PC-3 (cell line): ENCODE measurements at regions of chr5 and their contacts with region 1.

Region 1: DNA sequence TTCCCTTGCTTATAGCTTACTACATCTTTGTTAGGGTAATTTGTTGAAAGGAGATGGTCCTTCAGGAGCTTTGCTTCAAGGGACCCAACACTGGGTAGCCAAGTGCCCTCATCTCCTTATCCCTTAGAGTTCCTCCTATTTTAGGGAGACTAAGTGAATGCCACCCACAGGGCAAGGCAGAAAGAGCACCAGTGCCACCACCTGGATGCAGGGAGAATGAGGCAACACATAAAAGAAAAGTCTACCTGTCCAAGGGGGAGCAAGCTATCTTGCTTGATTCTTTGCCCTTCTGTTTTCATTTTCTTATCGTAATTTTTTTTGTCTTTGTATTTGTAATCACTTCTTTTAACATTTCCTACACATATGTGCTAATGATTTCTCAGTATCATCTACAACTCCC is 205.5 kb downstream of the NPR3 start:
- DNase-seq: peak; percentile 80
- ATAC-seq: peak; percentile 92
- H3K4me3 ChIP-seq: no peak overlapping the region
- H3K27ac ChIP-seq: no peak overlapping the region
- H3K4me1 ChIP-seq: no peaks in the 10 kb centered on the region
- H3K27me3 ChIP-seq: no peaks in the 10 kb centered on the region
- CTCF ChIP-seq: peak; percentile 95

Region 2: DNA sequence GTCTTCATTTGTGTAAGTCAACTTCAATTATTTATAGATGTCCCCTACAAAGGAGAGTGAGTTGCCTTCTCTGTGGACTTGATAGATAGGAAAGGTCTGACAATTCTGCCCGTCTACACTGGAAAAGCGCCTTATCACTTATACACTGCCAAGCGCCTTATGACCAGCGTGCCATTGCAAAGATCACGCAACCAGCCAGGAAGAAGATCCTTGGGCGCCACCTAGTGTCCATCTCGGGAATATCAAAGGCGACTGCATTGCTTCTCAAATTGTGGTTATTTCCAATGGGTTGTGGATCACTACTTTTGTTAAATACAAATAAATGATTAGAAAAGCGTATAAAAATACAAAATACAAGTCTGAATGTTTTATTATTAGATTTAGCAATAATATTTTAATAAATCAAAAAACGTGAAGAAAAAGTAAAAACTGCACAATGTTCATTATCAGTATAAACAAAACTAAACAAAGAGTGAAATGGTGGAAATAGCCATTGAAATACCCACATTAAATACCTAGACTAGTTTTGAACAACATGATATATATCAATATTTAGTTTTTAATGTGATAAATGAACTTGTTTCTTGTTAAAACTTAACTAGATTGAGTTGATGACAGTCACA is 303.5 kb before region 1 on chr5:
- CTCF ChIA-PET with region 1: no interaction called
- POLR2A ChIA-PET with region 1: no interaction called
- intact Hi-C with region 1: loop called (anchors 5 kb)
- DNase-seq: peak; percentile 87
- ATAC-seq: peak; percentile 81
- H3K4me3 ChIP-seq: no peak overlapping the region
- H3K27ac ChIP-seq: no peak overlapping the region
- H3K4me1 ChIP-seq: no peaks in the 10 kb centered on the region
- H3K27me3 ChIP-seq: no peaks in the 10 kb centered on the region
- CTCF ChIP-seq: peak; percentile 92

Region 3: GRCh38 chr5:32709781-32710549 is 206.7 kb before region 1 on chr5:
- CTCF ChIA-PET with region 1: interaction called, 15 read pairs
- POLR2A ChIA-PET with region 1: no interaction called
- intact Hi-C with region 1: loop called (anchors 1 kb)
- DNase-seq: peak; percentile 79
- ATAC-seq: peak; percentile 57
- H3K4me3 ChIP-seq: peak overlapping the region; percentile 85
- H3K27ac ChIP-seq: peak overlapping the region; percentile 47
- H3K4me1 ChIP-seq: peaks cover 40% of the 10 kb centered on the region
- H3K27me3 ChIP-seq: peaks cover 16% of the 10 kb centered on the region
- CTCF ChIP-seq: peak; percentile 86

Region 4: DNA sequence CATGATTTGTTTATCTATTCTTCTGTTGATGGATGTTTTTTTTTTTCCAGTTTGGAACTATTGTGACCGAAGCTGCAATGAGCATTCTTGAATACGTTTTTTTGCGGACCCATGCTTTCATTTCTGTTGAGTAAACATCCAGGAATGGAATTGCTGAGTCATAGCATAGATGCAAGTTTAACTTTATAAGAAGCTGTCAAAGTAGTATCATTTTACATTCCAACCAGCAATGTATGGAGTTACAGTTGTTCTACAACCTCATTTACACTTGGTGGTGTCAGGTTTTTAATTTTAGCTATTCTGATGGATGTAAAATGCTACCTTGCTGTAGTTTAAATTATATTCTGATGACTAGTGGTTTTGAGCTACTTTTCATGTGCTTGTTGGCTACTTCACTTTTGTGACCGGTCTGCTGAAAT is 156.5 kb before region 1 on chr5:
- CTCF ChIA-PET with region 1: no interaction called
- POLR2A ChIA-PET with region 1: no interaction called
- intact Hi-C with region 1: no loop called
- DNase-seq: peak; percentile 90
- ATAC-seq: peak; percentile 94
- H3K4me3 ChIP-seq: peak overlapping the region; percentile 22; the same call in 1 of the 2 replicates
- H3K27ac ChIP-seq: peak overlapping the region; percentile 48
- H3K4me1 ChIP-seq: peaks cover 11% of the 10 kb centered on the region
- H3K27me3 ChIP-seq: no peaks in the 10 kb centered on the region
- CTCF ChIP-seq: no peak

Region 5: DNA sequence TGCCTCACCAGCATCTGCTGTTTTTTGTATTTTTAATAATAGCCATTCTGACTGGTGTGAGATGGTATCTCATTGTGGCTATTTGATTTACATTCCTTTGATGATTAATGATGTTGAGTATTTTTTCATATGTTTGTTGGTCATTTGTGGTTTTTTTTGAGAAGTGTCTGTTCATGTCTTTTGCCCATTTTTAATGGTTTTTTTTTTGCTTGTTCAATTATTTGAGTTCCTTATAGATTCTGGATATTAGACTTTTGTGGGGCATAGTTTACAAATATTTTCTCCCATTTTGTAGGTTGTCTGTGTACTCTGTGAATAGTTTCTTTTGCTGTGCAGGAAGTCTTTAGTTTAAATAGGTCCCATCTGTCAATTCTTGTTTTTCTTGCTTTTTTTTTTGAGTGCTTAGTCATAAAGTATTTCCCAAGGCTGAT is 57.4 kb before region 1 on chr5:
- CTCF ChIA-PET with region 1: no interaction called
- POLR2A ChIA-PET with region 1: no interaction called
- intact Hi-C with region 1: no loop called
- DNase-seq: peak; percentile 83
- ATAC-seq: peak; percentile 42
- H3K4me3 ChIP-seq: no peak overlapping the region
- H3K27ac ChIP-seq: peak overlapping the region; percentile 69
- H3K4me1 ChIP-seq: peaks cover 37% of the 10 kb centered on the region
- H3K27me3 ChIP-seq: no peaks in the 10 kb centered on the region
- CTCF ChIP-seq: no peak

Region 6: GRCh38 chr5:33180900-33181299 is 264.3 kb after region 1 on chr5:
- CTCF ChIA-PET with region 1: no interaction called
- POLR2A ChIA-PET with region 1: no interaction called
- intact Hi-C with region 1: loop called (anchors 2 kb)
- DNase-seq: peak; percentile 66
- ATAC-seq: peak; percentile 73
- H3K4me3 ChIP-seq: no peak overlapping the region
- H3K27ac ChIP-seq: no peak overlapping the region
- H3K4me1 ChIP-seq: 0 out of 2 replicates have a peak, but pooled peaks cover 3% of the 10 kb centered on the region
- H3K27me3 ChIP-seq: no peaks in the 10 kb centered on the region
- CTCF ChIP-seq: peak; percentile 84

Region 7: GRCh38 chr5:33423018-33423630 is 506.5 kb after region 1 on chr5:
- CTCF ChIA-PET with region 1: interaction called, 7 read pairs
- POLR2A ChIA-PET with region 1: no interaction called
- intact Hi-C with region 1: loop called (anchors 5 kb)
- DNase-seq: peak; percentile 69
- ATAC-seq: peak; percentile 43; the same call in 1 of the 2 replicates
- H3K4me3 ChIP-seq: no peak overlapping the region
- H3K27ac ChIP-seq: no peak overlapping the region
- H3K4me1 ChIP-seq: no peaks in the 10 kb centered on the region
- H3K27me3 ChIP-seq: no peaks in the 10 kb centered on the region
- CTCF ChIP-seq: peak; percentile 73